ENCODE measurements at regions of chr10 and their contacts with region 1.

Region 1: DNA sequence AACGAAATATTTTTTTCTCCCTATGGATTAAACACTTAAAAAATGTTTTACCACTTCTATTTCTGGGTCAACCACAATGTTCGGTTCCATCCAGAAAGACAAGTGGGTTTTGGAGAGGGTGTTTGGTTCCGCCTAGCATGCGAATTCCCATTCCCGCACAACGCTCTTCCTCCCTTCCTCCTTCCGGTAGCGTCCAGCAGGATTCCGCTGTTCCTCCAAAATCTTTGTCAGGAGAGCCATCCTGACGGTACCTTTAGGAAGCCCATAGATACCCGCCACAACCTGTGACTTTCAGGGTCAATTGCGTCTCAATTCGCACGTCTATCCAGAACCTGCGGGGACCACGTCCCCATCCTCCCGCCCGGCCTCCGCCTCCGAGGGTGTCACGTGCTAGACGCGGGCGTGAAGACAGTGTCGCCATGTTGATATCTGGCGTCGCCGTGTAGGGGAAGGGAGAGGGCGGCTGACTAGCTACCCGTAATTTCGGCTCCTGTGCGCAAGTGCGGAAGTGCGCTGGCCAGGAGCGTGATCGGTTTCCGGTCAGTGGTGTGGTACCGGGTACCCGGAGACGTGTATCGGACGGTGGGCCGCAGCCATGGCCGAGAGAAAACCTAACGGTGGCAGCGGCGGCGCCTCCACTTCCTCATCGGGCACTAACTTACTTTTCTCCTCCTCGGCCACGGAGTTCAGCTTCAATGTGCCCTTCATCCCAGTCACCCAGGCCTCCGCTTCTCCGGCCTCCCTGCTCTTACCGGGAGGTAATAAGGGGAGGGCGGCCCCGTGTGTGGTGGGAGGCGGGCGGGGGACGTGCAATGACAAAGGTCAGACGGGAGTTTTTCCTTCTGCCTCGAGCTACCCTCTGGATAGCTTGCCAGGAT is at the start of gene SEC23IP:
- DNase-seq: peak; percentile 96
- ATAC-seq: peak; percentile 99
- H3K4me3 Mint-ChIP-seq: peak within 1 kb of the TSS; percentile 88
- H3K27ac Mint-ChIP-seq: peak within 1 kb of the TSS; percentile 94
- H3K4me1 Mint-ChIP-seq: peaks cover 41% of the 10 kb centered on the region
- H3K27me3 Mint-ChIP-seq: no peaks in the 10 kb centered on the region
- CTCF ChIP-seq: no peak
- total RNA-seq, gene SEC23IP: 60.3 to 61.4 TPM

Region 2: GRCh38 chr10:119872860-119873681 is 19.4 kb before region 1 on chr10:
- CTCF ChIA-PET with region 1: interaction called, 16 read pairs
- POLR2A ChIA-PET with region 1: interaction called, 38 read pairs
- intact Hi-C with region 1: loop called (anchors 2 kb)
- DNase-seq: peak; percentile 87
- ATAC-seq: peak; percentile 95
- H3K4me3 Mint-ChIP-seq: peak overlapping the region; percentile 80
- H3K27ac Mint-ChIP-seq: peak overlapping the region; percentile 91
- H3K4me1 Mint-ChIP-seq: peaks cover 34% of the 10 kb centered on the region
- H3K27me3 Mint-ChIP-seq: no peaks in the 10 kb centered on the region
- CTCF ChIP-seq: no peak